Body of pancreas (tissue), 4 donors: ENCODE measurements at regions of chr19 and their contacts with region 1.

Region 1: GRCh38 chr19:53195265-53195903 is 2.2 kb upstream of the ZNF665 start:
- DNase-seq: peak; percentile 82 to 90 (median 85)
- ATAC-seq: peak; percentile 55
- H3K4me3 ChIP-seq: no peak overlapping the region
- H3K27ac ChIP-seq: peak overlapping the region in 1 of 4 donors; percentile 36
- H3K4me1 ChIP-seq: peaks cover 28% of the 10 kb centered on the region
- H3K27me3 ChIP-seq: no peaks in the 10 kb centered on the region
- CTCF ChIP-seq: peak; percentile 63 to 95 (median 90)
- POLR2A ChIP-seq: no peak

Region 2: GRCh38 chr19:53123400-53123799 is 72.0 kb before region 1 on chr19:
- intact Hi-C with region 1: no loop called
- DNase-seq: no peak
- ATAC-seq: no peak
- H3K4me3 ChIP-seq: no peak overlapping the region
- H3K27ac ChIP-seq: no peak overlapping the region
- H3K4me1 ChIP-seq: no peaks in the 10 kb centered on the region
- H3K27me3 ChIP-seq: no peaks in the 10 kb centered on the region
- CTCF ChIP-seq: no peak
- POLR2A ChIP-seq: no peak

Region 3: GRCh38 chr19:53333463-53334449 is 138.4 kb after region 1 on chr19 and contains the start of gene ZNF845:
- intact Hi-C with region 1: loop called (anchors 10 kb)
- DNase-seq: peak; percentile 95 to 97 (median 96)
- ATAC-seq: peak; percentile 100
- H3K4me3 ChIP-seq: peak within 1 kb of the TSS; percentile 16 to 71
- H3K27ac ChIP-seq: peak within 1 kb of the TSS; percentile 30 to 78 (median 61)
- H3K4me1 ChIP-seq: peaks cover 12% of the 10 kb centered on the region
- H3K27me3 ChIP-seq: no peaks in the 10 kb centered on the region
- CTCF ChIP-seq: no peak
- POLR2A ChIP-seq: peak in 2 of 3 donors; percentile 62 to 67
- total RNA-seq, gene ZNF845: 3.0 to 4.2 TPM

Region 4: GRCh38 chr19:53365134-53365898 is 169.9 kb after region 1 on chr19 and contains the start of gene ZNF525:
- intact Hi-C with region 1: no loop called
- DNase-seq: peak; percentile 93 to 97 (median 95)
- ATAC-seq: peak; percentile 99
- H3K4me3 ChIP-seq: peak within 1 kb of the TSS; percentile 83 to 90
- H3K27ac ChIP-seq: peak within 1 kb of the TSS in 3 of 4 donors; percentile 51 to 85 (median 71)
- H3K4me1 ChIP-seq: peaks cover 8% of the 10 kb centered on the region
- H3K27me3 ChIP-seq: no peaks in the 10 kb centered on the region
- CTCF ChIP-seq: peak in 5 of 7 experiments; percentile 23 to 38 (median 26)
- POLR2A ChIP-seq: peak; percentile 11 to 79 (median 60)
- total RNA-seq, gene ZNF525: 12.2 to 14.2 TPM